ENCODE measurements at regions of chr1 and their contacts with region 1.

Region 1: DNA sequence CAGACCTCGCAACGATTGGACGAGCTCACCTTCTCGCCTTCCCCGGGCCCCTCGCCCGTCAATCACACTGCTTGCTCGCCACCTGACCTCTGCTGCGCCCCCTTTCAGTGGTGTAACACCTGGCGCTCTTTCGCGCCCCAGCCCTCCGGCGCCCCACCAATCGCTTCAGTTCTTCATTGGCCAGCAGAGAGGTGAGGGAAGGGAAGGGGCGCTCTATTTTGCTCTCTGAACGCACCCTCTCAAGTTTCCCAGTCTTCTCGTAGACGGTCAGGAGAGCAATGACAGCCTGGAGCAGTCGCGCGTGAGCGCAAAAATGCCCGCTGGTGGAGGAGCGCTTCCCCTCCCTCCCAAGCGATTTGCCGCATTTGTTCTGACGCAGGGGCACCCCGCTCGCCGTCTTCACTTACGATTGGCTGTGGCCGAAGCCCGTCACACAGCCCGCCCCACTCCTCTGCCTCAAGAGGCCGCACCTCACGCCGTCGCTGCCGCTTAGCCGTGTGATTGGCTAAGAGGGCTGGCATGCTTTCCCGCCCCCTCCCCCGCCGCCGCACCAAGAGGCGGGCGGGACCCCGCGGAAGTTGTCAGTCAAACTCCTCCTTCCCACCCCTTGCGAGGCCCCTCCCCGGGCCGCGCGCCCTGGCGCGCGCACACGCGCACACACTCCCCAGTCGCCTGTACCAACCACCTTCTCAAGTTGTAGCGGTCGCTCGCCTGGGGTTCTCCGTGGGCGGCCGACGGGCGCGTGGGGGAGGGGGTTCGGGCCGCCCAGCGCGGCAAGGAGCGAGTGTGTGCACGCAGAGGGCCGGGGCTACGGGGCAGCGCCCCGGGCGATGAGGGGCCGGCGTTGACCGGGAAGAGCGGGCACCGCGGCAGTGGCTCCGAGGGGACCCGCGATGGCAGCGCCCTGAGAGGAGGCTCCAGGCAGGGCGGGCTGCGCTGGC is at the start of gene PPP2R5A:
- DNase-seq: peak; percentile 99
- H3K4me3 ChIP-seq: peak within 1 kb of the TSS; percentile 57
- H3K4me3 Mint-ChIP-seq: peak within 1 kb of the TSS; percentile 95
- H3K27ac Mint-ChIP-seq: peak within 1 kb of the TSS; percentile 89
- H3K4me1 ChIP-seq: peaks cover 21% of the 10 kb centered on the region
- H3K4me1 Mint-ChIP-seq: peaks cover 13% of the 10 kb centered on the region
- H3K27me3 ChIP-seq: no peaks in the 10 kb centered on the region
- H3K27me3 Mint-ChIP-seq: no peaks in the 10 kb centered on the region
- CTCF ChIP-seq: peak; percentile 57 to 68
- total RNA-seq, gene PPP2R5A: 47.6 and 49.4 TPM in 2 replicates

Region 2: GRCh38 chr1:212078826-212079225 is 206.2 kb before region 1 on chr1:
- CTCF ChIA-PET with region 1: no interaction called
- POLR2A ChIA-PET with region 1: no interaction called
- intact Hi-C with region 1: no loop called
- DNase-seq: no peak
- H3K4me3 ChIP-seq: no peak overlapping the region
- H3K4me3 Mint-ChIP-seq: no peak overlapping the region
- H3K27ac Mint-ChIP-seq: no peak overlapping the region
- H3K4me1 ChIP-seq: peaks cover 8% of the 10 kb centered on the region; the same call in 1 of the 2 replicates
- H3K4me1 Mint-ChIP-seq: no peaks in the 10 kb centered on the region
- H3K27me3 ChIP-seq: no peaks in the 10 kb centered on the region
- H3K27me3 Mint-ChIP-seq: no peaks in the 10 kb centered on the region
- CTCF ChIP-seq: no peak

Region 3: DNA sequence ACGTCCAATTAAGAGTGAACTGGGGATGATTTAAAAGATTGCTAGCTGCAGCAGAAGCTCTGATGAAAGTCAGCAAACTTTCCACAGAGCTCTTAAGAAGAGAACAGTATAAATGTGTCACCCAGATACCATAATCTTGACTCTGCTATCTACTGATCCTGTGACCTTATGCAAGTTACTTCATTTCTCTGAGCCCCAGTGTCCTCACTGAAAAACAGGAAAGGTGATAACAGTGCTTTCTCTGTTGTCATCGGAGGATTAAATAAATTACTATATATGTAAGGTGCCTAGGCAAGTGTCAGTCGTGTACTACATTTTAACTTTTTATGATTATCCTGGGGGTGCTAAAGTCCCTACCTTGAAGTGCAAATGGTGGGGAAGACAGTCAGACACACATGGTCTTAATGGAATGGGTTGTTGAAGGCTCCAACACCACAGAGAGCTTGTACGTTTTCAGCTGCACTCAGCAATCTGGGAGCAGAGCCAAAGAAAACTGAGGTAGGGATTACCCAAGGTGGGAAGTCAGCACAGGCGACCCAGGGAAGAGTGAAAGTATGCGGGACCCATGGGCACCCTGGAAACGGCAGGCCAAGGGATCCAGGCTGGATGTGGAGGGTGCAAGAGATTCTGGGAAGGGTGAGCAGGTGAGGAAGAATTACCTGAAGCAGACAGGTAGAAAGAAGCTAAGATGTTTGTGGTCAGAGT is 166.7 kb before region 1 on chr1:
- CTCF ChIA-PET with region 1: no interaction called
- POLR2A ChIA-PET with region 1: no interaction called
- intact Hi-C with region 1: loop called (anchors 5 kb)
- DNase-seq: no peak
- H3K4me3 ChIP-seq: no peak overlapping the region
- H3K4me3 Mint-ChIP-seq: no peak overlapping the region
- H3K27ac Mint-ChIP-seq: no peak overlapping the region
- H3K4me1 ChIP-seq: peaks cover 20% of the 10 kb centered on the region; the same call in 1 of the 2 replicates
- H3K4me1 Mint-ChIP-seq: peaks cover 7% of the 10 kb centered on the region
- H3K27me3 ChIP-seq: no peaks in the 10 kb centered on the region
- H3K27me3 Mint-ChIP-seq: no peaks in the 10 kb centered on the region
- CTCF ChIP-seq: no peak

Region 4: GRCh38 chr1:212196355-212196754 is 88.7 kb before region 1 on chr1:
- CTCF ChIA-PET with region 1: no interaction called
- POLR2A ChIA-PET with region 1: no interaction called
- intact Hi-C with region 1: no loop called
- DNase-seq: no peak
- H3K4me3 ChIP-seq: no peak overlapping the region
- H3K4me3 Mint-ChIP-seq: no peak overlapping the region
- H3K27ac Mint-ChIP-seq: no peak overlapping the region
- H3K4me1 ChIP-seq: no peaks in the 10 kb centered on the region
- H3K4me1 Mint-ChIP-seq: peaks cover 7% of the 10 kb centered on the region
- H3K27me3 ChIP-seq: no peaks in the 10 kb centered on the region
- H3K27me3 Mint-ChIP-seq: no peaks in the 10 kb centered on the region
- CTCF ChIP-seq: no peak

Region 5: DNA sequence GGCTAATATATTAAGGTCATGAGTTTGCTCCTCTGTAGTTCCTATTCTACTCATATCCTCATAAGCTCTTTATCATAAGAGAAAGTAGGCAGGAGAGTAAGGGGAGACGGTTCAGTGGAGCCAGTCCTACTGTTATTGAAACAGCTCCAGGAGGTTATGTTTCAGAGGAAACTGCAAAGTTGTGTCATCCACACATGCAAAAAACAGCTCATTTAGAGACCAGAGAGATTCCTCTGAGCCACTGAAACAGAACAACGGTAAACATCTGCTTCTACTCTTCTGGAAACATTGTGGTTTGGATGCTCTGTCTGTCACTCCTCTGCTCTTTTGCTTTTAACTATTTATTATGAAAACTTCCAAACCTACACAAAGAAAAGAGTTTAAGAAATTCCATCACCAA is 66.1 kb before region 1 on chr1:
- CTCF ChIA-PET with region 1: interaction called, 6 read pairs
- POLR2A ChIA-PET with region 1: interaction called, 6 read pairs
- intact Hi-C with region 1: loop called (anchors 1 kb)
- DNase-seq: no peak
- H3K4me3 ChIP-seq: no peak overlapping the region
- H3K4me3 Mint-ChIP-seq: peak overlapping the region; percentile 62
- H3K27ac Mint-ChIP-seq: peak overlapping the region; percentile 97
- H3K4me1 ChIP-seq: peaks cover 61% of the 10 kb centered on the region
- H3K4me1 Mint-ChIP-seq: peaks cover 41% of the 10 kb centered on the region
- H3K27me3 ChIP-seq: no peaks in the 10 kb centered on the region
- H3K27me3 Mint-ChIP-seq: no peaks in the 10 kb centered on the region
- CTCF ChIP-seq: no peak

Region 6: GRCh38 chr1:212255705-212256307 is 29.2 kb before region 1 on chr1:
- CTCF ChIA-PET with region 1: no interaction called
- POLR2A ChIA-PET with region 1: interaction called, 4 read pairs
- intact Hi-C with region 1: loop called (anchors 2 kb)
- DNase-seq: no peak
- H3K4me3 ChIP-seq: no peak overlapping the region
- H3K4me3 Mint-ChIP-seq: no peak overlapping the region
- H3K27ac Mint-ChIP-seq: no peak overlapping the region
- H3K4me1 ChIP-seq: peaks cover 18% of the 10 kb centered on the region
- H3K4me1 Mint-ChIP-seq: peaks cover 20% of the 10 kb centered on the region
- H3K27me3 ChIP-seq: no peaks in the 10 kb centered on the region
- H3K27me3 Mint-ChIP-seq: no peaks in the 10 kb centered on the region
- CTCF ChIP-seq: no peak

Region 7: DNA sequence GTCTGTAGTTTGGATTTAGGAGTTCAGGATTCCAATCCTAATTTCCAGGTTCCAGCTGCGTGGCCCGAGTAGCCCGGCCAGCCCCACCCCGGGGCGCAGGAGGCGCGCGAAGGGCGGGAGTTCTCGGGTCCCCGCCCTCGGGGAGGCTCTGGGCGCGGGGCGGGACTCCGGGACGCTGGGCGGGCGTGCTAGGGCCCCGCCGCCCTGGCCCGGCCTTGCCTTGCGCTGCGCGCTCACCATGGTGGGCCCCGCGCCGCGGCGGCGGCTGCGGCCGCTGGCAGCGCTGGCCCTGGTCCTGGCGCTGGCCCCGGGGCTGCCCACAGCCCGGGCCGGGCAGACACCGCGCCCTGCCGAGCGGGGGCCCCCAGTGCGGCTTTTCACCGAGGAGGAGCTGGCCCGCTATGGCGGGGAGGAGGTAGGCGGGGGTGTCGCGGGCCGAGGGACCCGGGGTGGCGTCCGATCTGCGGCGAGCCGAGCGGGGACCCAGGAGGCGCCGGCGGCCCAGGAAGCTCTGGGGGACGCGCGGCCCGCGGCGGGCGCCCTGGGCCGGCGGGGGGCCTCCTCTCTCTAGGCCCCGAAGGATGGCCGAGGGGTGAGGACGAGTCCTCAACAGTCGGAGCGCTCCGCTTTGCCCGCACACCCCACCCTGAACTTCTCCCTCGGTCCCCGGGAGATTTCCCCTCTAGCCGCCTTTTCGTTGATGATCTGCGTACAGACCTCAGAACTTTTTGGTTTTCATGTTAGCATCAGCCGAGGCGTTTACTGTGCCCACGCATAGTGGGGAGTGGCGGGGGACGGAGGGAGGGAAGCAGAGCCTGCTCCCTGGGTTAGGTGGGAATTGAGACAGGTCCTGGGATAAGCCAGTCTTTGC is 147.9 kb after region 1 on chr1 and contains the start of gene NENF:
- CTCF ChIA-PET with region 1: no interaction called
- POLR2A ChIA-PET with region 1: no interaction called
- intact Hi-C with region 1: loop called (anchors 2 kb)
- DNase-seq: peak; percentile 81 to 92
- H3K4me3 ChIP-seq: peak within 1 kb of the TSS; percentile 64
- H3K4me3 Mint-ChIP-seq: peak within 1 kb of the TSS; percentile 79
- H3K27ac Mint-ChIP-seq: peak within 1 kb of the TSS; percentile 88
- H3K4me1 ChIP-seq: peaks cover 38% of the 10 kb centered on the region
- H3K4me1 Mint-ChIP-seq: peaks cover 45% of the 10 kb centered on the region
- H3K27me3 ChIP-seq: no peaks in the 10 kb centered on the region
- H3K27me3 Mint-ChIP-seq: no peaks in the 10 kb centered on the region
- CTCF ChIP-seq: no peak
- total RNA-seq, gene NENF: 90.1 and 95.7 TPM in 2 replicates

Region 8: DNA sequence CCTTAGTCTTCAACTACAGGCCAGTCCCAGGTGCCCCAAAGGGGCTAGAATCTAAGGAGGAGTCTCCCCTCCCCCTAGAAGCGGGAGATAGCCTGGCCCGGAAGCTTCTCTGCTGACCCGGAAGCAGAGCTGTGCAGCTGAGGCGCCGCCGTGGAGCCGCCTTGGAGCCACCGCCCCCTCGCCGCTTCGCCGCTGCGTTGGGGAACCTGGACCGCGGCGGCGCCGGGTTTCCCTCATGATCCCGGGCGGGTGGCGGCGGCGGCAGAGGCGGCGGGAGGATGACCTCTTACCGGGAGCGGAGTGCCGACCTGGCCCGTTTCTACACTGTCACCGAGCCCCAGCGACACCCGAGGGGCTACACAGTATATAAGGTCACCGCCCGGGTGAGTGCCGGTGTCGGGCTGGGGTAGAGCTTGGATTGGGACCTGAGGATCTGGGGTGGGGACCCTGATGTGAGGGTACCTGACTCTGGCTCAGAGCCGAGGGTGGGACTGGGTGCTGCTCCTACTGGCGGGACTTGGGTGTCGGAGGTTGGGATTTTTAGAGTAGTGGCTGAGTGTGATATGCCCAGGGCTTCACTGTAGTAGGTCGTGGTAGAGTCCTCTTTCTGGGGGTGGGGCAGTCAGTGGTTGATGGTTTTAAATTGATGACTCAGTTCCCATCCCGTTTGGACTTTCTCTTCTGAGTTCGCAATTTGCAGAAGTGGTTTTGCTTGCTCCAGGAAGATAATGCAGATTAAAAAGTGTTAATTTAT is 766.3 kb after region 1 on chr1 and contains the start of gene RPS6KC1:
- CTCF ChIA-PET with region 1: no interaction called
- POLR2A ChIA-PET with region 1: no interaction called
- intact Hi-C with region 1: no loop called
- DNase-seq: peak; percentile 87 to 88
- H3K4me3 ChIP-seq: peak within 1 kb of the TSS; percentile 77
- H3K4me3 Mint-ChIP-seq: peak within 1 kb of the TSS; percentile 96
- H3K27ac Mint-ChIP-seq: peak within 1 kb of the TSS; percentile 93
- H3K4me1 ChIP-seq: peaks cover 18% of the 10 kb centered on the region
- H3K4me1 Mint-ChIP-seq: peaks cover 24% of the 10 kb centered on the region
- H3K27me3 ChIP-seq: no peaks in the 10 kb centered on the region
- H3K27me3 Mint-ChIP-seq: no peaks in the 10 kb centered on the region
- CTCF ChIP-seq: peak in 1 of 2 experiments; percentile 13
- total RNA-seq, gene RPS6KC1: 16.4 and 18.8 TPM in 2 replicates

Measured in Caco-2 (cell line).